T-cell (primary cell): ENCODE measurements at regions of chr6 and their contacts with region 1.

Region 1: DNA sequence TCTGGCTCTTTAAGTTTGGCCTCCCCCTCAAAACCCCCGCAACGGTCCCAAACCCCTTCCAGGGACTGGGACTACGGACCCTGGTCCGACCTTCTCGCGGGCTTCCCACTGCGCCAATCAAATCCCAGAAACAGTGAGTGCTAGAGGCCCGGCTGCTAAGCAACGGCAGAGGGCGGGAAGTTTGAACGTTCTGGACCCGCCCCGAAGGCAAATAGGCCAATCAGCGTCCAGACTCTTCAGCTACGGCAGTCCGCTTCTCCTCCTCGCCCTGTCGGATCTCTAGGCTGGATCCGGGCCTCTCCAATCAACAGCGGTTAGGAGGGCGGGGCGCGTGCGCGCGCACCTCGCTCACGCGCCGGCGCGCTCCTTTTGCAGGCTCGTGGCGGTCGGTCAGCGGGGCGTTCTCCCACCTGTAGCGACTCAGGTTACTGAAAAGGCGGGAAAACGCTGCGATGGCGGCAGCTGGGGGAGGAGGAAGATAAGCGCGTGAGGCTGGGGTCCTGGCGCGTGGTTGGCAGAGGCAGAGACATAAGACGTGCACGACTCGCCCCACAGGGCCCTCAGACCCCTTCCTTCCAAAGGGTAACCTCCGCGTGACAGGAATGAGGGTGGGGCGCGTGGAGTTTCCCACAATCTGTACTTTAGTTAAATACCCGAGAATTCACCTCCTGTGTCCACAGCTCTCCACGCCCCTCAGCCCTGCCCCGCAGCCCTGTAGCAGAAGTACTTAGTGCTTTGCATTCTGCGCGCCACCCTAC is at the start of gene MSH5:
- DNase-seq: peak; percentile 81 to 96 (median 92)
- ATAC-seq: peak; percentile 89 to 93 (median 92)
- H3K4me3 ChIP-seq: peak within 1 kb of the TSS; percentile 82 to 92
- H3K4me3 Mint-ChIP-seq: peak within 1 kb of the TSS; percentile 85 to 95 (median 92)
- H3K27ac ChIP-seq: peak within 1 kb of the TSS; percentile 81
- H3K27ac Mint-ChIP-seq: peak within 1 kb of the TSS; percentile 88 to 95
- H3K4me1 ChIP-seq: peaks cover 39 to 53% of the 10 kb centered on the region in 2 experiments
- H3K4me1 Mint-ChIP-seq: peaks cover 56 to 62% (median 60%) of the 10 kb centered on the region in 3 donors
- H3K27me3 ChIP-seq: no peaks in the 10 kb centered on the region
- H3K27me3 Mint-ChIP-seq: no peaks in the 10 kb centered on the region
- total RNA-seq, gene MSH5: 13.7 to 22.4 (median 14.4) TPM

Region 2: DNA sequence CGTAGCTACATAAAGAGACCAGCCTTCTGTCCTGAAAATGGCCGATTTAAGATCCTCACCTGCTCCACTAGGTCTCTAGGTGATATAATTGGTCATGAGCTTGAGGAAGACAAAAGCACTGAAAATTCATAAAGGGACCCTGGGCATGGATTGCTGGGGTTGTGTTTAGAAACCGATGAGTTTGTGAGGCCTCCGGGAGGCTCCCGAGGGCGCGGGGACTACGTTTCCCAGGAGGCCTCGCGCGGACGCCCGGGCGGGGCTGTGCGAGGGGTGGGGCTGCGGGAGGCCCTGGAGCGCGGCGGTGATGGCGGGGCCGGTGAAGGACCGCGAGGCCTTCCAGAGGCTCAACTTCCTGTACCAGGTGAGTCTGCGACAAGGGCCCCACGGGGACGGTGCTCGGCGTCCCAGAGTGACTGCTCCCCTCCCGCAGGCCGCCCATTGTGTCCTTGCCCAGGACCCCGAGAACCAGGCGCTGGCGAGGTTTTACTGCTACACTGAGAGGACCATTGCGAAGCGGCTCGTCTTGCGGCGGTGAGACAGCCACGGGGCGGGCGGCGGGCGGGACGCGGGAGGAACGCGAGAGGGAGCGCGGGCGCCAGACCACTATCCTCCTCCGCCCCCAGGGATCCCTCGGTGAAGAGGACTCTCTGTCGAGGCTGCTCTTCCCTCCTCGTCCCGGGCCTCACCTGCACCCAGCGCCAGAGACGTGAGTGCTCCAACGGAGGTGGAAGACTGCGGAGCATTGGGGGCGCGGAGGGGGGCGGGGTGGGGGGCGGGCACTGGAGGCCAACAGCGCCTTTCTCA is 1394.7 kb before region 1 on chr6 and contains the start of gene RPP21:
- CTCF ChIA-PET with region 1: no interaction called
- POLR2A ChIA-PET with region 1: no interaction called
- DNase-seq: peak; percentile 69 to 89 (median 81)
- ATAC-seq: peak; percentile 98 to 100 (median 99)
- H3K4me3 ChIP-seq: peak within 1 kb of the TSS; percentile 70 to 82
- H3K4me3 Mint-ChIP-seq: peak within 1 kb of the TSS; percentile 83 to 93 (median 90)
- H3K27ac ChIP-seq: peak within 1 kb of the TSS; percentile 78
- H3K27ac Mint-ChIP-seq: peak within 1 kb of the TSS; percentile 93 to 95
- H3K4me1 ChIP-seq: peaks cover 4 to 10% of the 10 kb centered on the region in 2 experiments
- H3K4me1 Mint-ChIP-seq: peaks cover 25 to 37% (median 26%) of the 10 kb centered on the region in 3 donors
- H3K27me3 ChIP-seq: no peaks in the 10 kb centered on the region
- H3K27me3 Mint-ChIP-seq: no peaks in the 10 kb centered on the region
- total RNA-seq, gene RPP21: 38.4 to 64.6 (median 56.7) TPM

Region 3: DNA sequence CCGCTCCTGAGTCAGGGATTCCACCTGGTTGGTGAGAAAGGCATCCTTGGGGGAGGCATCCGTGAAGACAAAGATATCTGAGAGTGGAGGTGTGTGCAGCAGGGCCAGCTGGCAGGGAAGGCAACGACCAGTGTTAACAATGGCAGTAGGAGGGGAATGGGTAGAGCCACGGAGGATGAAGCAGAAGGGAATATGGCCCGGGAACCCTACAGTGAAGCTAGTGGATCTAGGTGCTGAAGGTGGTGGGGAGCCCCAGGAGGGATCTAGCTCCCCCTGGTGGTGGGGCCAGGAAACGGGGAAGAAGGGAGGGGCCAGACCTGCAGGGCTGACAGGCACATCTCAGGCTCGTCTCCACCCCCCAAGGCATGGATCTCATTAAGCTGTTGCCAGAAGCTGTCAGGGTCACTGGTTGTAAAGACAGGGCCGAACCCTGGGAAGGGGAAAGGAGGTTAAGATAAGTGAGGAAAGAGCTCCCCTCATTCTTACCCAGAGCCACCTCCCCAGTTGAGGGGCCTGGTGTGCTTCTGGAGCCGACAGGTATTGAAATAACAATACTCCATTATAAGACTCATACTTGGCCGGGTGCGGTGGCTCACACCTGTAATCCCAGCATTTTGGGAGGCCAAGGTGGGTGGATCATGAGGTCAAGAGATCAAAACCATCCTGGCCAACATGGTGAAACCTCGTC is 30.0 kb after region 1 on chr6:
- CTCF ChIA-PET with region 1: interaction called, 4 to 18 read pairs
- POLR2A ChIA-PET with region 1: no interaction called
- DNase-seq: peak; percentile 46 to 86 (median 70)
- ATAC-seq: peak; percentile 62 to 75 (median 68)
- H3K4me3 ChIP-seq: no peak overlapping the region
- H3K4me3 Mint-ChIP-seq: no peak overlapping the region
- H3K27ac ChIP-seq: no peak overlapping the region
- H3K27ac Mint-ChIP-seq: peak overlapping the region; percentile 12 to 13
- H3K4me1 ChIP-seq: peaks cover 10 to 45% of the 10 kb centered on the region in 2 experiments
- H3K4me1 Mint-ChIP-seq: peaks cover 24 to 30% (median 29%) of the 10 kb centered on the region in 3 donors
- H3K27me3 ChIP-seq: no peaks in the 10 kb centered on the region
- H3K27me3 Mint-ChIP-seq: no peaks in the 10 kb centered on the region